Head of caudate nucleus (tissue), 42 donors: ENCODE measurements at regions of chr5 and their contacts with region 1.

Region 1: GRCh38 chr5:173781814-173782670 is 106.1 kb upstream of the CPEB4 start:
- DNase-seq: peak; percentile 65 to 94 (median 81)

Region 2: DNA sequence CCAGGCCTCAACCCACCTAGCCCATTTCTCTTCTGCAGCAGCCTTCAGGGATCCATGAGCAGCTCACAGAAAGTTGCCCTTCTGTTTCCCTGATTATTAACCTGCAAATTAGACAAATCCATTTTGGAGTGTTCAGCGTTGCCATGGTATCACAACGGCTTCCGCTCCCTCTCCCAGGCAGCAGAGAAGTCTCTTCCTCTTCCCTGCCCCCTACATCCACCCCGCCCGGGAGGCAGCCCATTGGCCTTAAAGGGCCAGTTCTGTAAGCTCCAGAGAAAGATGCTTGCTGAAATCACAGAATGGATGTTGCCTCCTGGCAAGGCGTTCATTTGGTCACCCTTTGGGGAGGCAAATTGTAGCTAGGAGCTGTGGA is 117.9 kb before region 1 on chr5:
- intact Hi-C with region 1: no loop called
- DNase-seq: peak in 40 of 42 donors; percentile 25 to 80 (median 58)

Region 3: DNA sequence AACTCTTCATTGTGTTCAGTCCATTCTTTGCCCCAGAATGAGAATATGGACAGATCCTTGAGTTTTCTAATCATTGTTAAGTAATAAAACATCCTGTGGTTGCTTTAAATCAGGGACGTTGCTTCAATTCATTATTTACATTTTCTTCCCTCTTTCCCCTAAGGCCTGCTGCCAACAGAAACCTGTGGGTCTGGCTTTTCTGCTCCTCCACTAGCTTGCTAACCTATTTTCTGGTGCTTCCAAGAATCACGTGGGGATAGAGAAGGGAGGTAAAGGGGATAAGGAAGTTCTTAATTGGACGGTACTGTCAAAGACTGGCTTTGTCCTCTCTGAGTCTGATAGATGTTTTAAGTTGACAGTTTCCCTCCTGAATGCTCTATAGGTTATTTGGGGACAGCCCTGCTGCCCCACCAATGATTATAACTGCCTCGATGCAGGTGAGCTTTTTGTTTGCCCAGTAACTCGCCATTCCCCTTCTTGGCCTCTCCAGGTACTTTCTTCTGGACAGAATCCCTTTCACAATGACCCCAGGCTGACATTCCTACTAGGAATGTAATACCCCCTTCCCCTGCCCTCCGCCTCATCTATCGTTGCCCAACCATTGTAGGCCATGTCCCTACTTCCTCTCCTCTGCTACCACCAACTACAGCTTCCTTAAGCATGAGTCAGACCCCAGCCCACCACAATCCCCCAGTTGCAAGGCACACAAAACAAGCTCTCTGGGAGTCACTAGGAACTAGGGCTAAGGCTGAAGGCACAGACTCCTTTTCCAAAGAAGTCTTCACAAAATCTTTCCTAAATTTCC is 86.2 kb after region 1 on chr5:
- intact Hi-C with region 1: loop called (anchors 10 kb)
- DNase-seq: no peak